Pancreas (tissue), 10 donors: ENCODE measurements at regions of chr7 and their contacts with region 1.

Region 1: GRCh38 chr7:42831718-42832431 is 80.0 kb downstream of the C7orf25 start:
- DNase-seq: peak in 1 of 6 donors; percentile 29
- ATAC-seq: peak in 3 of 4 donors; percentile 80 to 82 (median 82)
- H3K4me3 ChIP-seq: no peak overlapping the region
- H3K27ac ChIP-seq: no peak overlapping the region
- H3K4me1 ChIP-seq: no peaks in the 10 kb centered on the region
- H3K27me3 ChIP-seq: no peaks in the 10 kb centered on the region
- CTCF ChIP-seq: peak in 2 of 4 donors; percentile 25 to 30

Region 2: GRCh38 chr7:41979834-41980307 is 852.0 kb before region 1 on chr7:
- intact Hi-C with region 1: loop called in 1 of 3 experiments (anchors 10 kb)
- DNase-seq: no peak
- ATAC-seq: peak in 3 of 4 donors; percentile 48 to 68 (median 56)
- H3K4me3 ChIP-seq: no peak overlapping the region
- H3K27ac ChIP-seq: no peak overlapping the region
- H3K4me1 ChIP-seq: peaks cover 0 to 4% (median 0%) of the 10 kb centered on the region in 3 donors
- H3K27me3 ChIP-seq: no peaks in the 10 kb centered on the region
- CTCF ChIP-seq: peak; percentile 37 to 78 (median 58)

Region 3: GRCh38 chr7:42628074-42628473 is 203.8 kb before region 1 on chr7:
- intact Hi-C with region 1: no loop called
- DNase-seq: no peak
- ATAC-seq: no peak
- H3K4me3 ChIP-seq: no peak overlapping the region
- H3K27ac ChIP-seq: no peak overlapping the region
- H3K4me1 ChIP-seq: no peaks in the 10 kb centered on the region
- H3K27me3 ChIP-seq: no peaks in the 10 kb centered on the region
- CTCF ChIP-seq: no peak

Region 4: DNA sequence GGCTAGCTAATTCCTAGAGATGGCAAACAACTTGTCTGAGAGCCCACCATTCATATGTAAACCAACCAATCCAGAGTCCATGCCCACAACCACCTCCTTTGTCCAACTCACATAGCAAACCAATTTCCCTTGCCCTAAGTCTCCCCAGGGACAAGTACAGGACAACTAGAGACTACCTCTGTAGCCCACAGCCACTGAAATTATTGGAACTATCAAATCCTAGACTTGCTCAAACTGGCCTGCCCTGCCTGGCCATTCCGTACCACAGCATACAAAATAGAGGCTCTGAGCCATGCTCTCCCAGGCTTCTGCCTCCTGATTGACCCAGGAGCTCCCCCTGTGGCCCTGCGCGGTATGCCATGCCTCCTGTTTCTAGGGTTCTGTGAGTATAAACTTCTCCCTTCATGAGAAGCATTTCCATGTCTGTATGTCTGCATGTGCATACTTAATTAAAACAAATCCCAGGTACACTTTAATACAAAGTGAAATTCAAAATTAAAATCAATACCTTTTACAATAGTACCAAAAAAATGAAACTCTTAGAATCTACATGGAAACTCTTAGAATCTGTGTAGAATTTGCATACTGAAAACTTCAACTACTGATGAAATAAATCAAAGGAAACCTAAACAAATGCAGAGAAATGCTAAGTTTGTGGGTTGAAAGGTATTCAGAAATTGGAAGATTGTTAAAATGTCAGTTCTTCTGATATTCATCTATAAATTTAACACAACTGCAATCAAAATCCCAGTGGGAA is 276.6 kb after region 1 on chr7:
- intact Hi-C with region 1: no loop called
- DNase-seq: peak; percentile 33 to 82 (median 64)
- ATAC-seq: peak; percentile 66 to 94 (median 87)
- H3K4me3 ChIP-seq: no peak overlapping the region
- H3K27ac ChIP-seq: no peak overlapping the region
- H3K4me1 ChIP-seq: peaks cover 0 to 9% (median 0%) of the 10 kb centered on the region in 3 donors
- H3K27me3 ChIP-seq: peaks cover 0 to 19% (median 5%) of the 10 kb centered on the region in 4 donors
- CTCF ChIP-seq: peak; percentile 45 to 76 (median 68)

Region 5: GRCh38 chr7:43124388-43124787 is 292.5 kb after region 1 on chr7:
- intact Hi-C with region 1: no loop called
- DNase-seq: no peak
- ATAC-seq: no peak
- H3K4me3 ChIP-seq: no peak overlapping the region
- H3K27ac ChIP-seq: no peak overlapping the region
- H3K4me1 ChIP-seq: no peaks in the 10 kb centered on the region
- H3K27me3 ChIP-seq: peaks cover 0 to 5% (median 0%) of the 10 kb centered on the region in 4 donors
- CTCF ChIP-seq: no peak

Region 6: GRCh38 chr7:43170571-43170970 is 338.7 kb after region 1 on chr7:
- intact Hi-C with region 1: no loop called
- DNase-seq: no peak
- ATAC-seq: no peak
- H3K4me3 ChIP-seq: no peak overlapping the region
- H3K27ac ChIP-seq: no peak overlapping the region
- H3K4me1 ChIP-seq: no peaks in the 10 kb centered on the region
- H3K27me3 ChIP-seq: no peaks in the 10 kb centered on the region
- CTCF ChIP-seq: no peak